Activated B cell treated with CpG ODN at 0.5 μM for 24 hours (primary cell): ENCODE measurements at regions of chr9 and their contacts with region 1.

Region 1: GRCh38 chr9:37371565-37372464 is 50.7 kb upstream of the GRHPR start:
- DNase-seq: peak; percentile 48
- ATAC-seq: peak; percentile 16
- H3K4me3 Mint-ChIP-seq: peak overlapping the region; percentile 57
- H3K27ac Mint-ChIP-seq: peak overlapping the region; percentile 100
- H3K4me1 Mint-ChIP-seq: peaks cover 91% of the 10 kb centered on the region
- H3K27me3 Mint-ChIP-seq: no peaks in the 10 kb centered on the region
- CTCF ChIP-seq: no peak

Region 2: DNA sequence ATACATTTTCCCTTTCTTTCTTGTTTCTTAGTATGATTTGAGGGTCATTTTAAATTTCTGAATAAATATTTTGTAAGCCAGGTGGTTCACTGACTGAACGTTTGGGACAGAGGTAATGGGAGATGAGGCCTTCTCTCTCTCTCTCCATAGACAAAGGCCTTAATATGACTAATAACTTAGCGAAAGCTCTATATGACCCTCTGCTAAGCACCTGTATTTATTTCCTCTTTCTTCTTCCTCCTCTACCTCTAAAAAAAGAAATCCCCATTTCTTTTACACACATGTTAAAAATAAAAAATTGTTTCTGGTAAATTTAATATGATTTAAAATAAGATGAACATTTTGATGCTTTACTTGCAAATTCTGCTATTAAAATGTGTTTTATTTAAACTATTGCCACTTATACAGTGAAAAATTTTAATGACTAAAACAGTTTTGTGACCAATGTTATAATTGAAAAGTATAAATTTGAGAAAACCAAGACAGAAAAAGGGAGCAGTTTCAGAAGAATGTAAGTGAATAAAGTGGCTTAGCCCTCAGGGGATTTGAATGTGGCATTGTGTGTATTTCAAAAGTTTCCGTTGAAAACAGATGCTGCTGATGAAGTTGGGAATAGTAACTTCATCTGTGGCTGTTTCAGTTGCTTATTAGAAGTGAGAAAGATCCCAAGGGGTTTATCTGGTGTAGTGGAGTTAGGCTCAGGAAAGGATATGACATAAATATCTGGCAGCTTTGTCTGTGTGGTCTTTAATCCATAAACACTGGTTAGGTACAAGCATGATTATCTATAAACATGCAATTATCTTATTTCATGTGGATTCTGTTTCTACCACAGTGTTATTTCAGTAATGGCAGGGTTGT is 77.9 kb before region 1 on chr9:
- CTCF ChIA-PET with region 1: no interaction called
- POLR2A ChIA-PET with region 1: interaction called, 8 read pairs
- intact Hi-C with region 1: loop called (anchors 2 kb)
- DNase-seq: no peak
- ATAC-seq: peak; percentile 69
- H3K4me3 Mint-ChIP-seq: peak overlapping the region; percentile 67
- H3K27ac Mint-ChIP-seq: peak overlapping the region; percentile 97
- H3K4me1 Mint-ChIP-seq: peaks cover 95% of the 10 kb centered on the region
- H3K27me3 Mint-ChIP-seq: no peaks in the 10 kb centered on the region
- CTCF ChIP-seq: no peak

Region 3: GRCh38 chr9:37329576-37329975 is 42.2 kb before region 1 on chr9:
- CTCF ChIA-PET with region 1: interaction called, 6 read pairs
- POLR2A ChIA-PET with region 1: interaction called, 34 read pairs
- intact Hi-C with region 1: no loop called
- DNase-seq: no peak
- ATAC-seq: peak; percentile 47
- H3K4me3 Mint-ChIP-seq: peak overlapping the region; percentile 33
- H3K27ac Mint-ChIP-seq: peak overlapping the region; percentile 83
- H3K4me1 Mint-ChIP-seq: peaks cover 71% of the 10 kb centered on the region
- H3K27me3 Mint-ChIP-seq: no peaks in the 10 kb centered on the region
- CTCF ChIP-seq: no peak

Region 4: GRCh38 chr9:37382161-37382981 is 10.6 kb after region 1 on chr9:
- CTCF ChIA-PET with region 1: interaction called, 6 read pairs
- POLR2A ChIA-PET with region 1: interaction called, 430 read pairs
- intact Hi-C with region 1: loop called (anchors 1 kb)
- DNase-seq: no peak
- ATAC-seq: peak; percentile 23
- H3K4me3 Mint-ChIP-seq: peak overlapping the region; percentile 53
- H3K27ac Mint-ChIP-seq: peak overlapping the region; percentile 97
- H3K4me1 Mint-ChIP-seq: peaks cover 94% of the 10 kb centered on the region
- H3K27me3 Mint-ChIP-seq: no peaks in the 10 kb centered on the region
- CTCF ChIP-seq: no peak

Region 5: DNA sequence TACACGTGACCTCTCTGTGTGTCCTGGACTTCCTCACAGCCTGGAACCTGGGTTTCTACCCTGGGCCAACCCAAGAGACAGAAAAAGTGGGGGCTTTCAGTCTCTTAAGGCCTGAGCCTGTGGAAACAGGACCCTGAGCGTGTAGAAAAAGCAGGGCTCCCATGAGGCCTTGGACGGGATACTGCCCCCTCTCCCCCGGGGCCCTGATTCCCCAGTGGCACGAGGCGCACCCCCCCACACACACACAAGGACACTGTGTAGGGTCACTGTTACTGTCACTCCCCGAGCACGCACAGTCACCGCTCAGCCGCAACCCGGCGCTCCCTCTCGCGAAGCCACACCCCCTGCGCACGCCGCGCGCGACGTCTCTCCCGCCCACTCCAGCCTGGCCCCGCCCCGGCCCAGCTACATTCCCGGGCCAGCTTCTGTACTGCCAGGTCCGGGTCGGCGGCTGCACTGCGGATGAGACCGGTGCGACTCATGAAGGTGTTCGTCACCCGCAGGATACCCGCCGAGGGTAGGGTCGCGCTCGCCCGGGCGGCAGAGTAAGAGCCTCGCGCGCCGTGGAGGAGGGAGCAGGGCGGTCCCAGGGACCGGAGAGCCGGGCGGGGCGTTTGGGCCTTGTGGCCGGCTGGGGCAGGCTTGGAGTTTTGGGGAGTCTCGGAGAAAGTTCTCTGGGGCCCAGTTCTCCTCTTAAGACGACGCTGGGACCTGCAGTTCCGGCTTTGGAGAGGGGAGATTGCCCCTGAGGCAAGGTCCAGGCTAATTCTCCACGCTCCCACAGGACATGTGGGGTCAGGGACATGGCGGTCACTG is 50.7 kb after region 1 on chr9 and contains the start of gene GRHPR:
- CTCF ChIA-PET with region 1: no interaction called
- POLR2A ChIA-PET with region 1: interaction called, 8 read pairs
- intact Hi-C with region 1: loop called (anchors 1 kb)
- DNase-seq: peak; percentile 90
- ATAC-seq: peak; percentile 98
- H3K4me3 Mint-ChIP-seq: peak within 1 kb of the TSS; percentile 96
- H3K27ac Mint-ChIP-seq: peak within 1 kb of the TSS; percentile 93
- H3K4me1 Mint-ChIP-seq: peaks cover 40% of the 10 kb centered on the region
- H3K27me3 Mint-ChIP-seq: no peaks in the 10 kb centered on the region
- CTCF ChIP-seq: no peak
- total RNA-seq, gene GRHPR: 315 TPM in 2 replicates